GM12878 (cell line): ENCODE measurements at regions of chr2 and their contacts with region 1.

Region 1: GRCh38 chr2:102057502-102058292 is 65.9 kb downstream of the IL1R2 start:
- DNase-seq: peak; percentile 65
- ATAC-seq: peak; percentile 92
- H3K4me3 ChIP-seq: no peak overlapping the region
- H3K27ac ChIP-seq: no peak overlapping the region
- H3K4me1 ChIP-seq: no peaks in the 10 kb centered on the region
- H3K27me3 ChIP-seq: no peaks in the 10 kb centered on the region; a peak in 1 of 4 replicates
- CTCF ChIP-seq: no peak
- EP300 ChIP-seq: peak; percentile 66 to 91; a peak in 3 of 4 replicates
- POLR2A ChIP-seq: no peak
- RAD21 ChIP-seq: no peak

Region 2: GRCh38 chr2:101998896-101999789 is 58.6 kb before region 1 on chr2:
- CTCF ChIA-PET with region 1: interaction called, 3 read pairs
- POLR2A ChIA-PET with region 1: no interaction called
- RAD21 ChIA-PET with region 1: interaction called, 11 read pairs
- SMC1A ChIA-PET with region 1: interaction called, 4 read pairs
- in situ Hi-C with region 1: no loop called
- intact Hi-C with region 1: no loop called
- DNase-seq: no peak
- ATAC-seq: peak; percentile 71
- H3K4me3 ChIP-seq: no peak overlapping the region
- H3K27ac ChIP-seq: peak overlapping the region; percentile 50; the same call in 1 of the 2 replicates
- H3K4me1 ChIP-seq: peaks cover 6% of the 10 kb centered on the region
- H3K27me3 ChIP-seq: no peaks in the 10 kb centered on the region; a peak in 2 of 4 replicates
- CTCF ChIP-seq: no peak; a peak in 1 of 6 replicates
- EP300 ChIP-seq: 0 out of 4 replicates have a peak, but pooled peaks of 1 of the 2 experiments have one; percentile 13
- POLR2A ChIP-seq: no peak
- RAD21 ChIP-seq: no peak

Region 3: GRCh38 chr2:102033031-102033749 is 24.5 kb before region 1 on chr2:
- CTCF ChIA-PET with region 1: interaction called, 6 read pairs
- POLR2A ChIA-PET with region 1: interaction called, 7 read pairs
- RAD21 ChIA-PET with region 1: interaction called, 77 read pairs
- SMC1A ChIA-PET with region 1: interaction called, 68 read pairs
- in situ Hi-C with region 1: no loop called
- intact Hi-C with region 1: no loop called
- DNase-seq: peak; percentile 53
- ATAC-seq: peak; percentile 94
- H3K4me3 ChIP-seq: no peak overlapping the region
- H3K27ac ChIP-seq: no peak overlapping the region
- H3K4me1 ChIP-seq: peaks cover 5% of the 10 kb centered on the region
- H3K27me3 ChIP-seq: no peaks in the 10 kb centered on the region
- CTCF ChIP-seq: no peak
- EP300 ChIP-seq: peak in 1 of 2 experiments; percentile 29; a peak in 1 of 4 replicates
- POLR2A ChIP-seq: no peak
- RAD21 ChIP-seq: no peak

Region 4: GRCh38 chr2:102074152-102074783 is 16.6 kb after region 1 on chr2:
- CTCF ChIA-PET with region 1: interaction called, 5 read pairs
- POLR2A ChIA-PET with region 1: interaction called, 4 read pairs
- RAD21 ChIA-PET with region 1: interaction called, 6 read pairs
- SMC1A ChIA-PET with region 1: interaction called, 33 read pairs
- in situ Hi-C with region 1: no loop called
- intact Hi-C with region 1: no loop called
- DNase-seq: no peak
- ATAC-seq: peak; percentile 74
- H3K4me3 ChIP-seq: no peak overlapping the region
- H3K27ac ChIP-seq: no peak overlapping the region
- H3K4me1 ChIP-seq: 0 out of 2 replicates have a peak, but pooled peaks cover 4% of the 10 kb centered on the region
- H3K27me3 ChIP-seq: no peaks in the 10 kb centered on the region
- CTCF ChIP-seq: 0 out of 6 replicates have a peak, but pooled peaks of 2 of the 3 experiments have one; percentile 8
- EP300 ChIP-seq: no peak
- POLR2A ChIP-seq: no peak
- RAD21 ChIP-seq: no peak

Region 5: DNA sequence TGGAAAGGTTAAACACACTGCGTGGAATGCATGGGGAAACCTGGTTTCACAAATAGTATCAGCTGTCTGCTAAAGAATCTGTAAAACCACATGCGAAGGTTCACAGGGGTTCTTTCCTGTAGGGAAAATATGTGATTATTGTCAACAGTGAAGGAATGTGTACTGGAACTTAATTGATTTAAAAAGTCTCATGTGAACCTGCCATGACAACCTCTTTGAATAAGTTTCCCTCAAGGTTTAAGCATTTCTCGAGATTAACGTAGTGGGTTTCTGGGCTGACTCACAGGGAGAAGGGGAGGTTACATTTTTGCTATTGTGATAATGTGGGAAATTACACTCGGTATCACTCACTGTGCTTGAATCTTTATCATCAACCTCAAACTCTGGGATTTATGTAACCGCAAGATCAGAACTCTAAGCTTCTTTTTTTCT is 56.6 kb after region 1 on chr2:
- CTCF ChIA-PET with region 1: interaction called, 3 read pairs
- POLR2A ChIA-PET with region 1: interaction called, 7 read pairs
- RAD21 ChIA-PET with region 1: interaction called, 6 read pairs
- SMC1A ChIA-PET with region 1: interaction called, 13 read pairs
- in situ Hi-C with region 1: no loop called
- intact Hi-C with region 1: no loop called
- DNase-seq: peak; percentile 33
- ATAC-seq: peak; percentile 67
- H3K4me3 ChIP-seq: no peak overlapping the region
- H3K27ac ChIP-seq: peak overlapping the region; percentile 17; the same call in 1 of the 2 replicates
- H3K4me1 ChIP-seq: peaks cover 14% of the 10 kb centered on the region
- H3K27me3 ChIP-seq: no peaks in the 10 kb centered on the region
- CTCF ChIP-seq: no peak
- EP300 ChIP-seq: no peak
- POLR2A ChIP-seq: no peak
- RAD21 ChIP-seq: no peak